ENCODE measurements at regions of chr20 and their contacts with region 1.

Region 1: GRCh38 chr20:58870239-58871014 is 17.9 kb downstream of the GNAS start:
- DNase-seq: peak; percentile 91
- ATAC-seq: peak; percentile 96
- H3K4me3 ChIP-seq: no peak overlapping the region
- H3K27ac ChIP-seq: 0 out of 2 replicates have a peak overlapping the region, but pooled peaks have one; percentile 3
- H3K4me1 ChIP-seq: peaks cover 13% of the 10 kb centered on the region
- H3K27me3 ChIP-seq: no peaks in the 10 kb centered on the region
- CTCF ChIP-seq: peak; percentile 98

Region 2: DNA sequence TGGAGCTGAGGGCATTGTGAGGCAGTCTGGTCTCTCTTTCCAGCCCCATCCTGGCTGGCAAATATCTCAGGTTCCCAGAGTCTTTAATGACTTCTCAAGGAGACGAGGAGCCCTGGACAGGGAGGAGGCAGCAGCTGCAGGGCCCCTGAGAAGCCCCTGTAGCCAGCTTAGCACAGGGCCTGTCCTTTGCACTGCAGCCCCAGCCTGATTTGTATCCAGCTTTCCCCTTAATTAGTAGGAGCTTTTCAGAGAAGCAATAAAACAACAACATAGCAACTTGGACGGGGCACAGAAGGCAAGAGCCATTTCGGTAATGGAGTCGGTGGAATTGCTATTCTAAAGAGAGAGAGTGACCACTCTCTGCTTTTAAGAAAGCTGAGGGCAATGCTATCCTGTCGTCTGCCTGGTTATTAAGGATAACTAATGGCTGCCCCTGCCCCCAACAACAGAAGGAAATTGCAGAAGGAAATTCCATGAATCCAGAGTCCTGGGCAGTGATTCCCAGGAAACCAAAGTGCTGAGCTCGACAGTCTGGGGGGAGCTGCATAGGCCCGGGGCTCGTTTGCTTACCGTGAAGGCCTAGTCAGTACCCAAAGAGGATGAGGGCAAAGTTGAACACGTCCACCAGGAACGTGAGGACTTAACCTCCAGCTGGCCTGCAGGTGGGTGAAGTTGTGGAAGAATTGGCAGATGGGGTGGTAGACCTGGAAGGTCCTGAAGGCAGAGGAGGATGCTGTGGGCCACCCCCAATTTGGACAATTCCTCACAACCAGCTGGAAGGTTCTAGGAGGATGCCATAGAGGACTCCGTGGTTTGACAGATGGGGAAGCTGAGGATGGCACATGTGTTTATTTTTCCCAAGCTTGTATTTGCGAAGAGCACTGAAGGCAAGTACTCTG is 127.5 kb before region 1 on chr20:
- CTCF ChIA-PET with region 1: no interaction called
- POLR2A ChIA-PET with region 1: no interaction called
- intact Hi-C with region 1: no loop called
- DNase-seq: no peak
- ATAC-seq: no peak
- H3K4me3 ChIP-seq: no peak overlapping the region
- H3K27ac ChIP-seq: no peak overlapping the region
- H3K4me1 ChIP-seq: no peaks in the 10 kb centered on the region
- H3K27me3 ChIP-seq: peaks cover 87% of the 10 kb centered on the region
- CTCF ChIP-seq: no peak

Region 3: DNA sequence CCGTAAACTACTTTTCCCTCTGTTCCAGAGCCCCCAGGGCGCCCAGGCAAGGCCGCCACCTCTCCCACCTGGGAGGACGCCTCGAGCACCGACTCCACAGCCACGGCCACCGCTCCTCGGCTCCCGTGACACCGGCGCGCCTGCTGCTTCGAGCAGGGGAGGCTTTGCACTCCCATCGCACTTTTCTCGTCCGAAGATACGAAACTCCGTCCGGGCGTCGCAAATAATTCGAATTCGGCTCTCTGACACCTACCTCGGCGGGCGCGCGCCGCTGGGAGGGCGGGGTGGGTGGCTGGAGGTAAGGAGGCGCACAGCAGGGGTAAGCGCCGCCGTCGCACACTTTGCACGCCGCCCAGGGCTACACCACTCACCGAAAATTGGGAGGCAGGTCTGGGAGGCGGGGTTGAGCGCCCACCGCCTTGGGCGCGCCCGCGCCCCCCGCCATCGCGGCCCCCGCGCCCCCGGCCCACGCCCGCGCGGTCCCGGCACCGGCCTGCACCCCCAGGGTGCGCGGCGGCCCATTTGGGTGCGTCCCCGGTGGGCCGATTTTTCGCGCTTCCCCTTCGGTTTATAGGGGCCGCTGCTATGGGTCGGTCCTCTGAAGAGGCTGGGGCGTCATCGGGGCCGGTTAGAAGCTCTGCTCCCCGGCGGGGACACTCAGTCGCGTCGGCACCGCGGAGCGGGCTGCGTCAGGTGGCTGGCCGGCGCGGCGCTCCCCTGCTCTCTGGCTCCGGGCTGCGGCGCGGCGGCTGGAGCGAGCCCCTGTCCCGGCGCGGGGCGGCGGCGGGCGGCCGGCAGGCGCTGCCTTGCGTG is 18.3 kb after region 1 on chr20:
- CTCF ChIA-PET with region 1: interaction called, 4 read pairs
- POLR2A ChIA-PET with region 1: no interaction called
- intact Hi-C with region 1: loop called (anchors 2 kb)
- DNase-seq: peak; percentile 83
- ATAC-seq: peak; percentile 65
- H3K4me3 ChIP-seq: peak overlapping the region; percentile 81
- H3K27ac ChIP-seq: no peak overlapping the region
- H3K4me1 ChIP-seq: peaks cover 24% of the 10 kb centered on the region
- H3K27me3 ChIP-seq: no peaks in the 10 kb centered on the region
- CTCF ChIP-seq: no peak

Region 4: DNA sequence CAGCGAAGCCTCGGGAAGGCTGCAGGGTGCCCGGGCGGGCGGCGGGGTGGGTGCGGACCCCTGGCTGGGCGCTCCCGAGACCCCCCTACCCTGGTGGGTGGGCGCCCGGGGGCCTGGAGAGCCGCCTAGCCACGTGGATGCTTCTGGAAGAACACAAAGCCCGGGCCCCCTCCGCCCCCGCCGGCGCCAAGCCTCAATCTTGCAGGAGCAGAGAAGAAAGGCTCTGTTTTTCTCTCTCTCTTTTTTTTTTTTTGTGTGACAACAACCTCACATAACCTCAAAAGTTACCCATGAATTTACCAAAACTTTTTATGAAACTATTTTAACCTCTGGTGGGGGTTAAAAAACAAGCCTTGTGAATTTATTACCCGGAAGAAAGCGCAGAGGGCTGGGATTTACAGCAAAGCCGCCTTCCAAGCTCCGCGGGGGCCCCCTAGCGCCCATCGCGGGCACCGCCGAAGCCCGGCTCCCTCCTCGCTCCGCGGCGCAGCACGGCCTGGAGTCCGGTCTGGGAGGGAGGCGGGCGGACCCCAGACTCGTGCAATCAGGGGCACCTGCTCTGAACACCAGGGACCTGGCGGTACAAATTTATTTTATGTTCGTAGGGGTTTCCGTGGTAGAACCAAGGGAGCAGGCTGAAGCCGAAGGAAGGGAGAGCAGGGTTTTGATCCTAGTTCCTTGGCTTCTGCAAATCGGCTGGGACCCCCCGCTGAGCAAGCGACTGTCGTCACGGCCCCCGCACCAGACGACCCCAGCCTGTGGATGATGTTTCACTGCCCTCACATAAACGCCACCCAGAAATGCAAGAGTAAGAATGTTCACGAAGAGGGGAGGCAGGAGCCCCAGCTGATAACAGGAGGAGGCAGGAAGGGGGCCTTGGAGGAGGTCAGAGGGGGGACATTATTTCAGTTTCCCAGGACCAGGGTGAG is 352.1 kb after region 1 on chr20:
- CTCF ChIA-PET with region 1: no interaction called
- POLR2A ChIA-PET with region 1: no interaction called
- intact Hi-C with region 1: loop called (anchors 1 kb)
- DNase-seq: peak; percentile 87
- ATAC-seq: peak; percentile 98
- H3K4me3 ChIP-seq: peak overlapping the region; percentile 71
- H3K27ac ChIP-seq: no peak overlapping the region
- H3K4me1 ChIP-seq: peaks cover 9% of the 10 kb centered on the region; the same call in 1 of the 2 replicates
- H3K27me3 ChIP-seq: peaks cover 93% of the 10 kb centered on the region
- CTCF ChIP-seq: peak; percentile 99

Region 5: DNA sequence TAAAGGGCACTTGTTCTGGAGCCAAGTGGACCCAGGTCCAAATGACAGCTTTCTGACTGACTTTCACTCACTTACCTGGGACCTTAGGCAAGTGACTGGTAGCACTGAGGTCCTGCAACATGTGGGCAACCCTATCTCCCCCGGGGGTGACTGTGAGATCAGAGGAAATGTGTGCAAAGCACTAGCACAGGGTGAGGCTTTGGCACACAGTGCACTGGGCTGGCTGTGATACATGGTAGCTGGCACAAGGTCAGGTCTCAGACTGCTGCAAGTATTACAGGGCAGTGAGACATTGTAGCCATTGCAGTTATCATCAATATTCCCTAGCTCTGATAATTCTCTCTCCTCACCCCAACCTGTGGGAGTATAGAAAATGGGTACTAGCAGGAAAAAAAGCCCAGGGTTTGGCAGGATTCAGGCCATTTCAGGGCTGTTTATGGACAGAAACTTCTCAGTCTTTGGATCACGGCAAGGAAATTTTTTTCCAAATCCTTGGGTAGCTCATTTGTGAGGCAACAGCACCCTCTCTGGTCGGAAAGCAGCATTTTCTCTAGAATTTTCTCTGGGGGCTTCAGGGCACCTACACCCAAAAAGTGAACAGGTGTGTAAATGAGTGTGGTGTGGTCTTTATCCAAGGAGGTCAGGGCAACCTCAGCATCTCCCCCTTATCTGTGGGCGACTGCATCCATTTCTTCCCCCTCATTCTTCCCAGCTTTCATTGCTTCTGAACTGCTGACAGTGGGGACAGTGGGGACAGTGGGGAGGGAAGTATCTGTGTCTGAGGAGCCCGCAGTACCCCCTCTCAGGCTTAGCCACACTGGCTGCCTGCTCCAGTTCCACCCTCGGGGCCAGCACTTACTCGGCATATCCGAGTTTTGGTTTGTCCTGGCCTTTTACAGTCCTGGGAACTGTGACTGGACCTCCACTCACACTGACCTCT is 585.2 kb after region 1 on chr20:
- CTCF ChIA-PET with region 1: interaction called, 3 read pairs
- POLR2A ChIA-PET with region 1: no interaction called
- intact Hi-C with region 1: loop called (anchors 1 kb)
- DNase-seq: peak; percentile 48
- ATAC-seq: peak; percentile 69
- H3K4me3 ChIP-seq: no peak overlapping the region
- H3K27ac ChIP-seq: no peak overlapping the region
- H3K4me1 ChIP-seq: no peaks in the 10 kb centered on the region
- H3K27me3 ChIP-seq: peaks cover 48% of the 10 kb centered on the region
- CTCF ChIP-seq: peak; percentile 83

Region 6: GRCh38 chr20:59495894-59496510 is 625.6 kb after region 1 on chr20:
- CTCF ChIA-PET with region 1: no interaction called
- POLR2A ChIA-PET with region 1: no interaction called
- intact Hi-C with region 1: loop called (anchors 2 kb)
- DNase-seq: peak; percentile 74
- ATAC-seq: peak; percentile 96
- H3K4me3 ChIP-seq: no peak overlapping the region
- H3K27ac ChIP-seq: no peak overlapping the region
- H3K4me1 ChIP-seq: no peaks in the 10 kb centered on the region
- H3K27me3 ChIP-seq: peaks cover 52% of the 10 kb centered on the region
- CTCF ChIP-seq: peak; percentile 93